ENCODE measurements at regions of chr3 and their contacts with region 1.

Region 1: GRCh38 chr3:32391643-32392535 is at the start of gene CMTM7:
- DNase-seq: peak; percentile 79
- H3K4me3 ChIP-seq: peak within 1 kb of the TSS; percentile 57
- H3K27ac ChIP-seq: peak within 1 kb of the TSS; percentile 59
- H3K4me1 ChIP-seq: no peaks in the 10 kb centered on the region
- H3K27me3 ChIP-seq: no peaks in the 10 kb centered on the region
- CTCF ChIP-seq: no peak
- total RNA-seq, gene CMTM7: 5.8 to 5.9 TPM

Region 2: DNA sequence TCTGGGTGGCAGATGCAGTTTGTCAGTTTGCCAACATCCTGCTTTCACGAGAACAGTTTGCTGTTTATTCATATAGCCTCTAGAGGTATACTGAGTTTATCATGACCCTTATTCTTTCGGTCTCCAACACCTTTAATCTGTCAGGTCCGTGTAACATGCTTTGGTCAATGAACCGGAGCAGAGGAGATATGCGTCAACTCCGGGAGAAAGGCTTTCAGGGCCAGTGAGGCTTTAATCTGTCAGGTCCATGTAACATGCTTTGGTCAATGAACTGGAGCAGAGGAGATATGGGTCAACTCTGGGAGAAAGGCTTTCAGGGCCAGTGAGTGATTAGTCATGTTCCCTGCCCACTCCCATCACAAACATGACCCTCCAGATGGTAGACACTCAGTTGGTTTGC is 302.4 kb before region 1 on chr3:
- intact Hi-C with region 1: no loop called
- DNase-seq: no peak
- H3K4me3 ChIP-seq: no peak overlapping the region
- H3K27ac ChIP-seq: no peak overlapping the region
- H3K4me1 ChIP-seq: no peaks in the 10 kb centered on the region
- H3K27me3 ChIP-seq: no peaks in the 10 kb centered on the region
- CTCF ChIP-seq: no peak

Region 3: GRCh38 chr3:32302601-32303398 is 89.1 kb before region 1 on chr3:
- intact Hi-C with region 1: loop called (anchors 10 kb)
- DNase-seq: no peak
- H3K4me3 ChIP-seq: no peak overlapping the region
- H3K27ac ChIP-seq: no peak overlapping the region
- H3K4me1 ChIP-seq: no peaks in the 10 kb centered on the region
- H3K27me3 ChIP-seq: no peaks in the 10 kb centered on the region
- CTCF ChIP-seq: no peak